ENCODE measurements at regions of chr9 and their contacts with region 1.

Region 1: DNA sequence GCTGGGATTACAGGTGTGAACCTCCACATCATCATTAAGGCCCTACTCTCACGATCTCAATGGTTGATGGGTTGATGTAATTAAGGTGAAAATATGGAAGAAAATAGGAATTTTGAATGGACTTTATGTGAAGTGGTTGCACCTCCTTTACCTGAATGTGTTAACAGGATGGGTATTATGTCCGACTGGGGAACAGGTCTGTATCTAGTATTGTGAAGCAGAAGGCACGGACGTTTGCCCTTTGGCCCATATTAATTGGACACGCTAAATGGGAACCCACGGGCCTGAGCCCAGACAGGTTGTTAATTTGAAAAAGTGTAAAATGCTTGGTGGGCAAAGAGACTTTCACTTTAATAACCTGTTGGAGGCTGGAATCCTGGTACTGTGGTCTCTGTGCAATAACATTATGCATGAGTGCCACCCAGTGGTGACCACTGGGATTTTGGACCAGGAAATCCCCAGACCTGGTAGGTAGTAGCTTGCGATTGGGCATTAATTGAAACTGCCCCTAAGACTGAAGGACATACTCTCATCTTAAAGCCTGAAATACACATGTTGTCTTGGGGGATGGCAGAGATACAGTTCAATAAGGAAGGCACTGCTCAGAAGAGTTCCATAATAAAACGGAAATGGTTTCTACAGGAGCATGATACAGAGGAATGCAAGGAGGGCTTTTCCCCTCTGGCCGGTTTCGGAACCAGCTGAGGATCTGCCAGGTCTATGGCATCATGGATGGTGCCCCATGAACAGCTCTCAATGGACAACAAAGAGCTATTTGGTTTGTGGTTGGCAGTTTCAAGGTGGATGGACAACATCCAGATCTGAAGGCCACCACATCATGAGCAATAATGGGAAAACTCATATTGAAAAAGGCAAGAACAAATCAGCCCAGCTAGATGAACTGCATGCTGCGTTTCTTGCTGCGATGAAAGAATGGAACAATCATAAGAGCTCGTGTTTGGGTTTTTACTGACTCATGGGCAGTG is 26.2 kb upstream of the BICD2 start:
- DNase-seq: peak; percentile 76
- H3K4me3 ChIP-seq: no peak overlapping the region
- H3K27ac ChIP-seq: no peak overlapping the region
- H3K4me1 ChIP-seq: no peaks in the 10 kb centered on the region
- H3K27me3 ChIP-seq: no peaks in the 10 kb centered on the region
- CTCF ChIP-seq: peak; percentile 78 to 84

Region 2: DNA sequence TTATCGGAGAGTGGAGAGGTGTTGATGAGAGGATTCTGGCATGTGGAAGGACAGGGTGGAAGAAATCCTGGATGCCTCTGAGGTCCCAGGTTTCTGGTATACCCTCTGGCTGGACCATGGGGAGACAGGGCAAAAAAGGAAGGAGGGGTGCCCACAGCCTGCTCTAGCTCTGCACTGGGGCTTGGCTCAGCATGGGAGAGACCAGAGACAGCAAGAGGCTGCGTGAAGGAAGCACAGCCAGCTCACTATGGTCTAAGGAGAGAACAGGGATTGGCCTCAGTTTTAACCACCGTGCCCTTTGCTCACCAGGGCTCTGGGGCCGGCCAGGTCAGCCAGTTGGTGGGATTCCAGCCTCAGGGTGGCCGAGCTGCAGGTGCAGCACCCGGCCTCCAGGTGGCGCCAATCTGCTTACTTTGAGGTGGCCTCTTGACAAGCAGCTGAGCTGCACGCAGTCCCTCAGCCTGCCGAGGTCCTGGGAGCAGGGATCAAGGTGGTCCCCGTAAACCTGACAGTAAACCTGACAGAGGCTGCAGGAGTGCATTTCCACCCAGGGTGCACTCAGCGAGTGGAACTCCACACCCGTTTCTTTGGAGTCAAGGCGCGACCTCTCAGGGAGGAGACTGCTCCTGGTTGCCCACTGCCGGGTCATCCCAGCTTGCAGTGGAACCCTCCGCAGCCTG is 650.6 kb before region 1 on chr9:
- CTCF ChIA-PET with region 1: interaction called, 3 read pairs
- dilution Hi-C with region 1: no loop called
- in situ Hi-C with region 1: no loop called
- intact Hi-C with region 1: loop called (anchors 2 kb)
- DNase-seq: peak; percentile 52
- H3K4me3 ChIP-seq: no peak overlapping the region
- H3K27ac ChIP-seq: no peak overlapping the region
- H3K4me1 ChIP-seq: peaks cover 12% of the 10 kb centered on the region
- H3K27me3 ChIP-seq: no peaks in the 10 kb centered on the region
- CTCF ChIP-seq: peak; percentile 81 to 93

Region 3: DNA sequence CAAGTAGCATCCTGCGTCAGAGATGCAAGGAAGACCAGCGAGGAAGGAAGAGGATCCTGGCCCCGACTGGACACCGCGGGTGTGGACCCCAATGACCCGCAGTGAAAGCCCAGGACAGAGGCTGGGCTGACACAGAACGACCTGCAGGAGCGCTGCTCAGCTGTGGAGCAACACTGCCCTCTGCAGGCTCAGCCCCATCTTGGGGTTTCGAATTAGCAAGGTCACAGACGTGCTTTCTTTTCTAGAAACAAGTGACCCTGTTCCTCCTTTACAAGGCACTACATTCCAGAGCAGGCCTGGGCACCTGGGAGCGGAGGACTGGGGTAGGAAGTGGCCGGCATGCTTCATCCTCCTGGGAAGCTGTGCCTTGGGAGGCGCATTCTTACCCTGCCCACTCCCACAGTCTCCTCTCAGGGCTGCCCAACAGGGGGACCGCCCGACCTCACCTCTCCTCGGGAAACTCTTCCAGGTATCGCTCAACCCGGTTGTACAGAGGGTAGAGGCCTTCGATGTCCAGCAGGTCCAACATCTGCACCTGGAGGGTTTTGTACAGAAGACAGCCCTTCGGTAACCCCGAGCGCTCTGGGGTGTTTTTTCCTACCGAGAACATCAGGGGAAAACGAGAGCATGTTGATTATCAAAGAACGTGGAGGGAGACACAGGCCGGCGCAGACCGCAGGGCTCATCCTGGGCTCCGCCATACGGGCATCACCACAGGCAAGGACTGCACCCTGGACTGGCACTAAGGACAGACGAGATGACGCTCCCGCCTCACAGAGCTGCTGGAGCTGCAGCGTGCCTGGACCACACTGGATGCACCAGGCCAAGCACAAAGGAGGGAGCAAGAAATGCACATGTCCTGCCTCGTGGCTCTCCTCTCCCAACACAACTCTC is 155.9 kb before region 1 on chr9:
- CTCF ChIA-PET with region 1: no interaction called
- dilution Hi-C with region 1: no loop called
- in situ Hi-C with region 1: loop called in 1 of 2 experiments (anchors 25 kb)
- intact Hi-C with region 1: no loop called
- DNase-seq: peak; percentile 44
- H3K4me3 ChIP-seq: no peak overlapping the region
- H3K27ac ChIP-seq: no peak overlapping the region
- H3K4me1 ChIP-seq: no peaks in the 10 kb centered on the region
- H3K27me3 ChIP-seq: no peaks in the 10 kb centered on the region
- CTCF ChIP-seq: peak; percentile 94 to 98

Region 4: DNA sequence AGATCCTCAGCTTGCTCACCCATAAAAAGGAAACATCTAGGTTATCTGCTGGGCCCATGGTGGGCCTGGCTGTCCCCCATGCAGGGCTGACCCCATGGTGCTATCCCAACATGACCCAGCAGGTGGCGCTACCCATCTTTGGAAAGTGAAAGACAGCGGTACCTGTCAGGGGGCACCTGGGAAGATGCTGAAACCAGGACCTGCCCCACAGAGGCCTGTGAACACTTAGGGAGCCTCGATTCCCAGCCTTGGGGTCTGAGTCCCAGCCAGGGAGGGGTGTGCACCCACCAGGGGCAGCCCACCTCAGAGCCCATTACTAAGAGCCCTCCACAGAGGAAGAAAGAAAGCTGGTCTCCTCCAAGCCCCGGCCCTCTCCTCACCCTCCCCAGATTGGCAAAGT is 74.3 kb before region 1 on chr9:
- CTCF ChIA-PET with region 1: no interaction called
- dilution Hi-C with region 1: no loop called
- in situ Hi-C with region 1: loop called in 1 of 2 experiments (anchors 5 kb)
- intact Hi-C with region 1: loop called (anchors 1 kb)
- DNase-seq: peak; percentile 46
- H3K4me3 ChIP-seq: no peak overlapping the region
- H3K27ac ChIP-seq: peak overlapping the region; percentile 29
- H3K4me1 ChIP-seq: peaks cover 30% of the 10 kb centered on the region
- H3K27me3 ChIP-seq: no peaks in the 10 kb centered on the region
- CTCF ChIP-seq: peak; percentile 83 to 96

Region 5: DNA sequence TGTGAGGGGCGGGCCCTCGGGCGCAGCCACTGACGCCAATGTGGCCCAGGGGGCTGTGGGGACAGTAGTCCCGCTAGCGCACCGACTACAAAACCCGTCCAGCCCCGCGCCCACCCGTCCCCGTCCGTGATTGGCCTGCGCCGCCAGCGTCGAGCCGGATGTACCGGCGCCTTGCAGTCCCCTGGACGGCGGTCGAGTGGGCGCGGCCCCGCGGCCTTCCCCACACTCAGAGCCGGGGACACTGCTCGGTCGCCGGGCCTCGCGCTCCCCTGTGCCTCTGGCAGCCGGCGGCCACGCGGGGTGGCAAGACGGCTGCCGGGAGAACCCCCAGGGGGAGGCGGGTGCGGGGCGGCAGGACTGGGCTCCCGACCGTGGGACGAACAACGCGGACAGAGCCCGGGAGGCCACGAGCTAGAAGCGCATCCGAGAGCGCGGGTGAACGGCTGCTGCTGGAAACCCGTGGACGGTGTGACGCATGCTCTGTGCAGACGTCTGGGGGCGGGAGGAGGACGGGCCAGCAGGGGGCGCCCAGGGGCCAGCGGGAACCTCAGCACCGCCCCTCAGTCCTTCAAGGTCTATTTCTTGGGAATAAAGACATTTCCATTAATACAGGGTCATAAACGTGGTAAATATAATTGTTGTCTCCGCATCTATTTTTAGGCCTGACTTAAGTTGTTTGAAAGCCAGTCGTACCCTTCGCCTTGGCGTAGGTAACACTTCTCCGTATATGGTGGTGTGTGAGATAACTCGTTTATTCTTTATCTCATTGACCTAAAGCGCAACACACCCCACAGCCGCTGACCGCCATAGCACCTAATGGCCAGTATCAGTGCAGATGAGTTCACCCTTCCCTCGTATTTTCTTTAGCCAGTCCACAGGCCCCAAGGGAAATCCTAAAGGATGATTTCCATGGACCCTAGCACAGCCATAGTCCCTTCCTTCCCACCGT is 25.6 kb before region 1 on chr9:
- CTCF ChIA-PET with region 1: interaction called, 8 read pairs
- dilution Hi-C with region 1: no loop called
- in situ Hi-C with region 1: no loop called
- intact Hi-C with region 1: loop called (anchors 1 kb)
- DNase-seq: peak; percentile 98
- H3K4me3 ChIP-seq: peak overlapping the region; percentile 48 to 64 (median 61)
- H3K27ac ChIP-seq: peak overlapping the region; percentile 77
- H3K4me1 ChIP-seq: peaks cover 42% of the 10 kb centered on the region
- H3K27me3 ChIP-seq: no peaks in the 10 kb centered on the region
- CTCF ChIP-seq: peak; percentile 91 to 96

Region 6: DNA sequence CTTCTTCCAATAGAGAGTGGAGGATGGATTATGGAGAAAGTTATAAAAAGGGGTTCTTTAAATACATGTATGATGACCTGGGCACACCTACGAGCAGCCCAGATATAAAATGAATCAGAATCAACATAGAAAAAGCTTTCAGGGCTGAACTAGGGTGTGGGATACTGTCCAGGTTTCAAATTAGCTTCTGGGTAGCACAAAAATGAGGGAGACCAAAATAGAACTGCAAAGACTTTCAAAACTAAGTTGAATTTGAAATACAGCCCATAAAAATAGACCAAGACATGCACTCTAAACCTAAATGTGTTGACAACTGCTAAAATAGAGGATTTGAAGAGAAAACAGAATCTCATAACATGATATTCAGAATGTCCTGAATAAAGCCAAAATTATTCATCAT is 70.0 kb after region 1 on chr9:
- CTCF ChIA-PET with region 1: no interaction called
- dilution Hi-C with region 1: loop called (anchors 5 kb)
- in situ Hi-C with region 1: no loop called
- intact Hi-C with region 1: no loop called
- DNase-seq: no peak
- H3K4me3 ChIP-seq: no peak overlapping the region
- H3K27ac ChIP-seq: no peak overlapping the region
- H3K4me1 ChIP-seq: no peaks in the 10 kb centered on the region
- H3K27me3 ChIP-seq: no peaks in the 10 kb centered on the region
- CTCF ChIP-seq: no peak

Measured in mammary epithelial cell (primary cell).